BJ (cell line): ENCODE measurements at regions of chr2 and their contacts with region 1.

Region 1: DNA sequence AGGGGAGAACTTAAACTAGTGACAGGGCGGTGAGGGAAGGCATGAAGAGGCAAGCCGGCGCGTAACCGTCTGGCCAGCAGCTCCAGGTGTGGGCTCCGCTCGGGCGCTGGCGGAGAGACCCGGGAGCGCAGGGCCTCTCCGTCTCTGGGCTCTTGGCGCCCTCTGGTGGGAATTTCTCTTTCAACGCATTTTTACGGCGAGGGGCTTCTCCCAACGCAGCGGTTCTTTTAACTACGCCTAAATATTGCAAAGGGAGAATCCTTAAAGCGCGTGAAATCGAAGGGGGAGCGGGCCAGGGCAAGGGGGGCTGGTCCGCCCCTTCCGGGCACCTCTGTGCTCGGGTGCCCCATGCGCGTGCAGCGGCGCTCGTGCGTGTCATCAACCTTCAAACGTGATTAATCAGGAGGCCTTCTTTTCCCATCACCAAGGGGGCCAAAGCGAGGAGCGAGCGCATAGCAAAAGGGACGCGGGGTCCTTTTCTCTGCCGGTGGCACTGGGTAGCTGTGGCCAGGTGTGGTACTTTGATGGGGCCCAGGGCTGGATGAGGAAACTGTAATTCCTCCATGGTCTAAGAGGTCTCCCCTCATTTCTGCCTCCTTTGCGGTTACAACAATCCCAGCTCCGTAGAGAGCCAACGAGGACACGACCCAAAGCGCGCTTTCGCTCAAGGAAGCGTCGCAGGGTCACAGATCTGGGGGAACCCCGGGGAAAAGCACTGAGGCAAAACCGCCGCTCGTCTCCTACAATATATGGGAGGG is 762 bp upstream of the GAD1 start:
- DNase-seq: no peak
- H3K4me3 ChIP-seq: peak overlapping the region; percentile 46
- H3K27me3 ChIP-seq: peaks cover 53% of the 10 kb centered on the region
- CTCF ChIP-seq: peak; percentile 75

Region 2: GRCh38 chr2:170235860-170236679 is 579.9 kb before region 1 on chr2:
- CTCF ChIA-PET with region 1: interaction called, 13 read pairs
- POLR2A ChIA-PET with region 1: no interaction called
- DNase-seq: no peak
- H3K4me3 ChIP-seq: no peak overlapping the region
- H3K27me3 ChIP-seq: peaks cover 1% of the 10 kb centered on the region; the same call in 1 of the 2 replicates
- CTCF ChIP-seq: peak; percentile 55

Region 3: GRCh38 chr2:170377500-170378207 is 438.3 kb before region 1 on chr2:
- CTCF ChIA-PET with region 1: interaction called, 11 read pairs
- POLR2A ChIA-PET with region 1: no interaction called
- DNase-seq: no peak
- H3K4me3 ChIP-seq: no peak overlapping the region
- H3K27me3 ChIP-seq: no peaks in the 10 kb centered on the region
- CTCF ChIP-seq: no peak

Region 4: GRCh38 chr2:170409164-170409535 is 406.8 kb before region 1 on chr2:
- CTCF ChIA-PET with region 1: interaction called, 69 read pairs
- POLR2A ChIA-PET with region 1: no interaction called
- DNase-seq: no peak
- H3K4me3 ChIP-seq: no peak overlapping the region
- H3K27me3 ChIP-seq: no peaks in the 10 kb centered on the region
- CTCF ChIP-seq: peak; percentile 85